ENCODE measurements at regions of chr4 and their contacts with region 1.

Region 1: DNA sequence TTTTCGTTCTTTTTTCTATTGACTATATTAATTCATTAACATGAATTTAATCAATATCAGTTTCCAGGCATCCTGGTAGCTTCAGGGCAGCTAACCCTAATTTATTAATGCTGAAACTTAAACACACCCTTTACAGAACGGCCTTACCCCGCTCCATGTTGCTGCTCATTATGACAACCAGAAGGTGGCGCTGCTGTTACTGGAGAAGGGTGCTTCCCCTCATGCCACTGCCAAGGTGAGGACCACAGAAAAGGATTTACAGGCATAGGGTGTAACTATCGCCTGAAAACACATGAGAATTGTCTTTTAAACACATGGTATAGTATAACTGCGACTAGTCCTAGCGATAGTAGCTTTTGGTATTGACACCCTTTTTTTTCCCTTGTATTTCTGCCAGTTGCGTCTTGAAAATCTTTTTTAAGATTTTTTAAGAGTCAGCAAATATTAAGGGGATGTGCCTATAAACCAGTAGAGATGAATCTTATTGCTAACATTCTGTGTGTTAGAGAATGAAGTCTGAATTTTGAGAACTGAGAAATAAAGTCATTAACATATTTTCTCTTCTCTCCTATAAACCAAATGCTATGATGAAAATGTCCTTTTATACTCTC is 229.0 kb downstream of the ANK2 start:
- DNase-seq: peak; percentile 88
- H3K4me3 Mint-ChIP-seq: no peak overlapping the region
- H3K27ac Mint-ChIP-seq: no peak overlapping the region
- H3K4me1 Mint-ChIP-seq: no peaks in the 10 kb centered on the region
- H3K27me3 Mint-ChIP-seq: peaks cover 15% of the 10 kb centered on the region

Region 2: DNA sequence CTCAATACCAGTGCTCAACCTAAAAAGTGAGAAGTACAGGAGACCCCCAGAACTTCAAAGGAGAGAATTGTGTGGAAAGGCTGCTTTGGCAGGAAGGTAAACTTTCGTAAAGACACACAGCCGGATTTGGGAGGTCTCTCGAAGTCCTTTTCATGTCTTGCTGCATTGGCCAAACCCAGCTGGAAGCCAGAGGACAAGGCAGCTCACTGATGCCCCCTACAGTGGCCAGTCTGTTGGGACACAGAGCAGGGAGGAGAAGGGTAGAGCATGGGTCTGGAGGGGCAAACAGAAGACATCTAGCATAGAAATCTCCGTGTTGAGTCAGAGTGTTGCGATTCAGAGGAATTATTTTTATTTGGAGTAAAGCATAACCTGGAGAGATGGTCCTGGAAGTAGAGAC is 30.1 kb before region 1 on chr4:
- CTCF ChIA-PET with region 1: no interaction called
- intact Hi-C with region 1: no loop called
- DNase-seq: no peak
- H3K4me3 Mint-ChIP-seq: no peak overlapping the region
- H3K27ac Mint-ChIP-seq: no peak overlapping the region
- H3K4me1 Mint-ChIP-seq: no peaks in the 10 kb centered on the region
- H3K27me3 Mint-ChIP-seq: peaks cover 10% of the 10 kb centered on the region

Region 3: DNA sequence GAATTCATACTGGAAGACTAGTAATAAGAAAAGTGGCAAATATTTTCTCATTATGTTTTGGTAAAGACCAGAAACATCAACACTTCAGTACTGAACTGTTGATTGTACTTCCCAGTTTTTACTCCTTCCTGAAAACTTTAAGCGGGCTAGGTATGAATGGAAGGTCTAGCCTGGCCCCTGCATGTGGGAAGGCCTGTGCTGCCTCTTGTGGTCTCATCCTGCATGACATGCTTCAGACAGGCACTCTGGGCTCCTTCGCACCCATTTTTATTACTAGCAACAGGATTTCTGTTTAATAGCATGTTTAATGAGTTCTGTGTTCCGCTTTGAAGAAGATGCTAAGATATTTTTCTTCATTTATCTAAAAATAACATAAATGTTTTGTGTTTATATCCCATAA is 50.1 kb after region 1 on chr4:
- CTCF ChIA-PET with region 1: no interaction called
- intact Hi-C with region 1: loop called (anchors 1 kb)
- DNase-seq: peak; percentile 13
- H3K4me3 Mint-ChIP-seq: no peak overlapping the region
- H3K27ac Mint-ChIP-seq: no peak overlapping the region
- H3K4me1 Mint-ChIP-seq: no peaks in the 10 kb centered on the region
- H3K27me3 Mint-ChIP-seq: peaks cover 6% of the 10 kb centered on the region

Region 4: GRCh38 chr4:113869743-113870375 is 591.4 kb after region 1 on chr4:
- CTCF ChIA-PET with region 1: no interaction called
- intact Hi-C with region 1: no loop called
- DNase-seq: peak; percentile 80
- H3K4me3 Mint-ChIP-seq: no peak overlapping the region
- H3K27ac Mint-ChIP-seq: peak overlapping the region; percentile 82
- H3K4me1 Mint-ChIP-seq: peaks cover 19% of the 10 kb centered on the region
- H3K27me3 Mint-ChIP-seq: no peaks in the 10 kb centered on the region

Region 5: DNA sequence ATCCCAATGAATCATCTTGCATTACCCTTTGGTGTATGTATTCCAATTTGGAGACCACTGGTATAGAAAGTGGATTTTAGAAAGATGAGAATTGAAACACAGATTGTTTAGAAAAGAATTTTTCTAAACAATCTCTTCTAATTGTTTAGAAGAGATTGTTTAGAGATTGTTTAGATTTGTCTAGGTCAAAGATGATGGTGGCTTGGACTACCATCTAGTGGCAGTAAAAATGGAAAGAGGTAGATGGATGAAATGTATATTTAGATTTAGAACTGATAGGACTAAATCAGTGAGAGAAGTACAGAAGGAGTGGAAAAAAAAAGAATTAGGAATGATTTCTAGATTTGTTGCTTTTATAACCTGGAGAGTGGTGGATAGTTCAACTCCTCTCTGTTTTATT is 630.4 kb after region 1 on chr4:
- CTCF ChIA-PET with region 1: no interaction called
- intact Hi-C with region 1: loop called (anchors 5 kb)
- DNase-seq: no peak
- H3K4me3 Mint-ChIP-seq: no peak overlapping the region
- H3K27ac Mint-ChIP-seq: no peak overlapping the region
- H3K4me1 Mint-ChIP-seq: peaks cover 25% of the 10 kb centered on the region
- H3K27me3 Mint-ChIP-seq: no peaks in the 10 kb centered on the region